ENCODE measurements at regions of chr17 and their contacts with region 1.

Region 1: GRCh38 chr17:74659898-74660297 is 36.4 kb upstream of the CD300E start:
- DNase-seq: no peak
- H3K4me3 Mint-ChIP-seq: no peak overlapping the region
- H3K27ac Mint-ChIP-seq: no peak overlapping the region
- H3K4me1 Mint-ChIP-seq: peaks cover 6% of the 10 kb centered on the region
- H3K27me3 Mint-ChIP-seq: peaks cover 89% of the 10 kb centered on the region
- CTCF ChIP-seq: no peak

Region 2: DNA sequence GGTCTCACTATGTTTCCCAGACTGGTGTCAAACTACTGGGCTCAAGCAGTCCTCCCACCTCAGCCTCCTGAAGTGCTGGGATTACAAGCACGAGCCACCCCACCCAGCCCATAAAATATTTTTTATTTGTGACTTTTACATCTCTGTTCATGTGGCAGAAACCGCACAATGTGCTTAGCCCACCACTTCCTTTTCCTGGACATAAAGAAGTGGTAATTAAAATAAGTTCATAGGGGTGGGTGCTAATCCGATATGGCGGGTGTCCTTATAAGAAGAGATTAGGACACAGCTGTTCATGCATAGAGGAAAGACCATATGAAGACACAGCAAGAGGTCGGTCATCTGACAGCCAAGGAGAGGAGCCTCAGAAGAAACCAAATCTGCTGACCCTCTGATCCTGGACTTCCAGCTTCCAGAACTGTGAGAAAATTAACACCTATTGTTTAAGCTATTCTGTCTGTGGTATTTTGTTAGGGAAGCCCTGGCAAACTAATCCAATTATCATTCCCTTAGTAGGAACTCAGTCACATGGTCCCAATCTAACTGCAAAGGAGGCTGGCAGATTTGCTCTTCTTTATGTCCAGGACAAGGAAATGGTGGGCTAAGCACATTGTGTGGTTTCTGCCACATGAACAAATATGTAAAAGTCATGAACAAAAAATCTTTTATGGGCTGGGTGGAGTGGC is 735.3 kb before region 1 on chr17:
- CTCF ChIA-PET with region 1: no interaction called
- POLR2A ChIA-PET with region 1: no interaction called
- intact Hi-C with region 1: no loop called
- DNase-seq: no peak
- H3K4me3 Mint-ChIP-seq: no peak overlapping the region
- H3K27ac Mint-ChIP-seq: no peak overlapping the region
- H3K4me1 Mint-ChIP-seq: no peaks in the 10 kb centered on the region
- H3K27me3 Mint-ChIP-seq: peaks cover 81% of the 10 kb centered on the region
- CTCF ChIP-seq: no peak

Region 3: DNA sequence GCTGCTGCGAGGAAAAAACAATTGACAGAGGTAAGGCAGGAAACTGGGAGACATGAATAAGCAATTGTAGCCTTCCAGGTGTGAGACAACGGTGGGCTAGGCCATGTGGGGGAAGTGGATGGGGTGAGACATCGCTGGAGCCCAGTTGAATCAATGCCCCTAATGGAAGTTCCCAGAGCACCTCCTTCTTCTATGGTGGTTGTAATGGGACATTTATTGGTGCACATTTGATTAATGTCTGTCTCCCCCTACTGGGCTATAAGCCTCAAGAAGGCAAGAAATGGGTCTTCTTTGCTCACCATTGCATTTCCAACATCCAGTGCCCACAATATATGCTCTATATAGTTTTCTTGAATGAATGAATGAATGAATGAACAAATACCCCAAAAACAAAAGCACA is 13.7 kb before region 1 on chr17:
- CTCF ChIA-PET with region 1: interaction called, 14 read pairs
- POLR2A ChIA-PET with region 1: no interaction called
- intact Hi-C with region 1: no loop called
- DNase-seq: peak; percentile 61
- H3K4me3 Mint-ChIP-seq: no peak overlapping the region
- H3K27ac Mint-ChIP-seq: no peak overlapping the region
- H3K4me1 Mint-ChIP-seq: no peaks in the 10 kb centered on the region
- H3K27me3 Mint-ChIP-seq: peaks cover 52% of the 10 kb centered on the region
- CTCF ChIP-seq: peak; percentile 62

Region 4: DNA sequence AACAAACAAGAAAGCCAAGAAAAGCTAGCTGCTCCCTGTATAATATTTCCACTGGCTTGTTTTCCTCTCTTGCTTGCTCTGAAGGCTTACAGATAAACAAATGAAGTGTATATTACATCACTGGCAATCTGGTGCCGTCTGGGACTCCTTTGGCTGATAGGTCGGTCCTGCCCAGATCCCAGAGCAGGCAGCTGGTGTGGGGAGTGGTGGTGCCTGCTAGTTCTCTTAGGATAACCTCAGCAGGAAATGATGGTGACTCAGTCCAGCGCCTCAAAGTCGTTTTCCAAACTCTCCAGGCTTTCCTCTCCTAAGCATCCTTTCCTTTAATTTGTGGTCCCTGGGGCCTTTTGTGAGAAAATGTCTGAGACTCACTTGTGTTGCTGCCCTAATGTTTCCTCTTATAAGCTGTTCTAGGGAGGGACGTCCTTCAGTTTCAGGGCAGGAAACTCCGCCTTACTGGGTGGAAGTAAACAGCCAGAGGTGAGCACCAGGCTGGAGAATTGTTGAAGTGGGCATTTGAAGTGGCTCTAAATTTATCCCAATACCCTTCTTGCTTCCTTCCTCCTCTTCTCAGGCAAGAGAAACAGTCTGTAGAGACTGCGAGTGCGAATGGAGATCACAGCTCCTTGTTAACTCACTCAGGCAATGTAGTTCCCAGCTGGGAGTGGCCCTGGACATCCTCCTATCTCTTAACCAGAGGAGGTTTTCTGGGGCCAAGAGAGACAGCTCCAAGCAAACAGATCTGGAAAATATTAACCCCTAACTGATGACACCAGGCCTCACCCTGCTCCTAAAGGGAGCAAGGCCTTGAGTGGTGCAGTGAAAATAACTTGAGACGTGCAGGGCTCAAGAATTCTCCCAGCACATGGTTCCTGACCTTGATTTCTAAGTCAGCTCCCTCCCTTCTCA is 17.9 kb after region 1 on chr17:
- CTCF ChIA-PET with region 1: interaction called, 22 read pairs
- POLR2A ChIA-PET with region 1: no interaction called
- intact Hi-C with region 1: no loop called
- DNase-seq: peak; percentile 20
- H3K4me3 Mint-ChIP-seq: no peak overlapping the region
- H3K27ac Mint-ChIP-seq: no peak overlapping the region
- H3K4me1 Mint-ChIP-seq: no peaks in the 10 kb centered on the region
- H3K27me3 Mint-ChIP-seq: peaks cover 86% of the 10 kb centered on the region
- CTCF ChIP-seq: no peak

Region 5: GRCh38 chr17:74736513-74737298 is 76.8 kb after region 1 on chr17 and contains the start of gene RAB37:
- CTCF ChIA-PET with region 1: interaction called, 9 read pairs
- POLR2A ChIA-PET with region 1: no interaction called
- intact Hi-C with region 1: loop called (anchors 1 kb)
- DNase-seq: no peak
- H3K4me3 Mint-ChIP-seq: no peak within 1 kb of the TSS
- H3K27ac Mint-ChIP-seq: no peak within 1 kb of the TSS
- H3K4me1 Mint-ChIP-seq: no peaks in the 10 kb centered on the region
- H3K27me3 Mint-ChIP-seq: peaks cover 24% of the 10 kb centered on the region
- CTCF ChIP-seq: no peak
- total RNA-seq, gene RAB37: not detected in 2 replicates

Region 6: DNA sequence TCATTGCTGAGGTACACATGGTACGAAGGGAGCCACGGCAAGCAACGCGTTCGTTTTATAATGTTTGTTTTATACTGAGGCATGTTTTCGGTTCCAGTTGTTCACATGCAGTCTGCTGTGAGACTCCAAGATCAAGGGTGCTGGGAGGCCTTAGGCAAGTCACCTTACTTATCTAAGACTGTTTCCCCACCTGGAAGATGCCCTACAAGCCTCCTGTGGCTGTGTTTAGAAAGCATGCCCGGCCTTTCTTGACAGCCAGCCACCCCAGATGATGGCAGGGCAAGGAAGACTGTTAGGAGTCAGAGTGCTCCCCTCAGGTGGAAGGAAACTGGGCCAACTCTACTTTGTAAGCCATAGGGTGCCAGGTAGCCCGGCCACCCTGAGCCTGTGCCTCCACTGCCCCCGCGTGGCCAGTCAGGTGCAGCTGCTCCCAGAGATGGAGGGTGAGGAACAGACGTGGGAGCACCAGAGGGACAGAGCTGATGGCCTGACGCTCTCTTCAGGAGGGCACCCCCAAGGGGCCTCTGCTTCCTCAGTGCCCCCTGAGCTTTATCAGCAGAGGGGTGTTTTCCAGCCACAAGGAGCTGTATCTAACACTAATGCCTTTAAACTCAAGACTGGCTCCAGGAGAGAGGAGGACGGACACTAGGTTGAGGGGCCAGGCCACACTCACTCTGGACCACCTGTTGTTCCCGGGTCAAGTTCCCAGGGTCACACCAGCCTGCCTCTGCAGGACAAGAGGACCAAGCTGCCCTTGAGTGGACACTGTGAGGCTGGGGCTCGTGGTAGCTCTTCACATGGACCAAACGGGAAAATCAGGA is 110.8 kb after region 1 on chr17:
- CTCF ChIA-PET with region 1: interaction called, 17 read pairs
- POLR2A ChIA-PET with region 1: interaction called, 3 read pairs
- intact Hi-C with region 1: loop called (anchors 5 kb)
- DNase-seq: peak; percentile 80
- H3K4me3 Mint-ChIP-seq: no peak overlapping the region
- H3K27ac Mint-ChIP-seq: peak overlapping the region; percentile 19
- H3K4me1 Mint-ChIP-seq: peaks cover 25% of the 10 kb centered on the region
- H3K27me3 Mint-ChIP-seq: no peaks in the 10 kb centered on the region
- CTCF ChIP-seq: peak; percentile 93

Measured in MCF 10A (cell line).